Activated CD4-positive, alpha-beta T cell treated with anti-CD3 and anti-CD28 coated beads, Interleukin-2, amount 10 ng/mL, durations not matched to agents 24 days and 14 days (primary cell): ENCODE measurements at regions of chr13 and their contacts with region 1.

Region 1: DNA sequence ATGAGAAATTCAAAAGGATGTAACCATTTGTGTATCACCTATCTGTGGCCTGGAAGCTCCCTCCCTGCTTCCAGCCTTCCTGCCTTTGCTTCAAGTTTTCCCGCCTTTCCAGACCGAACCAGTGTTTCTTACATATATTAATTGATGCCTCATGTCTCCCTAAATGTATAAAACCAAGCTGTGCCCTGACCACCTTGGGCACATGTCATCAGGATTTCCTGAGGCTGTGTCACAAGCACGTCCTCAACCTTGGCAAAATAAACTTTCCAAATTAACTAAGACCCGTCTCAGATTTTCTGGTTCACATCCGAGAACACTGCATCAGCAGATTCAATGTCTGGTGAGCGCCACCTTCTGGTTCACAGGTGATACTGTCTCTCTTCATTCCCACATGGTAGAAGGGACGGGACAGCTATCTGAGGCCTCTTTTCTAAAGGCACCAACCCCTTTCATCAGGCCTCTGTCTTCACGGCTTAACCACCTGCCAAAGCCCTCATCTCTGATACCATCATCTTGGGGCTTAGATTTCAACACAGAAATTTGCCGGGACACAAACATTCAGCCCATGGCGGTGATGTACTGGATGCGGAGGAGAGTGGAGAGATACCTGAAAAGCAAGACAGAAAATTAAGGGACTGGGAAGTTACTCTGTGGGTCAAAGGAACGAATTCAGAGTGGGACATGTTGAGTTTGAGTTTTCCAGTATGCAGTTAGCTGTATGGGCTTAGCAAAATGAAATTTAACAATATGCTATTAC is 58.7 kb upstream of the PABPC3 start:
- DNase-seq: peak; percentile 86
- H3K4me3 Mint-ChIP-seq: no peak overlapping the region
- H3K27ac Mint-ChIP-seq: no peak overlapping the region
- H3K4me1 Mint-ChIP-seq: no peaks in the 10 kb centered on the region
- H3K27me3 Mint-ChIP-seq: peaks cover 41% of the 10 kb centered on the region

Region 2: DNA sequence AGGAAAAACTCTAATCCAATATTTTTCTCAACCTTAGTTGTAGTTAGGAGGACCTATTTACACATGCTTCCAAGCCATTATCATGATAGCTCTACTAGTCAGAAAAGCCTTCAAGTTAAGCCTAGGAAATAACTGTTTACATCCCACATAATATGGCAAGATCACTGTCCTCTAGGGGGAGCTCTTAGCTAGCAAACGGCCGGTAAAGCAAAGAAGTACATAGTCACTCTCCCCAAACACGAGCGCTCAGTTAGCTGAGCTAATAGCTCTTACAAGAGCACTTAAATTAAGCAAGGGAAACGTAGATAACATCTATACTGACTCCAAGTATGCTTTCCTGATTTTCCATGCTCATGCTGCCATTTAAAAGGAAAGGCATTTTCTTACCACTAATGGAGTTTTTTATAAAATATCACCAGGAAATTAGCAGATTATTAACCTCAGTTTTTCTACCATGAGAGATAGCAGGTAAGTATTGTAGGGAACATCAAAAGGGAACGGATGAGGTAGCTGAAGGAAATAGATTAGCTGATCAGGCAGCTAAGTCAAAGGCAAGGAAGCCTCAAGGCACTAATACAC is 41.9 kb before region 1 on chr13:
- intact Hi-C with region 1: loop called (anchors 1 kb)
- DNase-seq: peak; percentile 89
- H3K4me3 Mint-ChIP-seq: no peak overlapping the region
- H3K27ac Mint-ChIP-seq: no peak overlapping the region
- H3K4me1 Mint-ChIP-seq: peaks cover 3% of the 10 kb centered on the region
- H3K27me3 Mint-ChIP-seq: peaks cover 24% of the 10 kb centered on the region

Region 3: DNA sequence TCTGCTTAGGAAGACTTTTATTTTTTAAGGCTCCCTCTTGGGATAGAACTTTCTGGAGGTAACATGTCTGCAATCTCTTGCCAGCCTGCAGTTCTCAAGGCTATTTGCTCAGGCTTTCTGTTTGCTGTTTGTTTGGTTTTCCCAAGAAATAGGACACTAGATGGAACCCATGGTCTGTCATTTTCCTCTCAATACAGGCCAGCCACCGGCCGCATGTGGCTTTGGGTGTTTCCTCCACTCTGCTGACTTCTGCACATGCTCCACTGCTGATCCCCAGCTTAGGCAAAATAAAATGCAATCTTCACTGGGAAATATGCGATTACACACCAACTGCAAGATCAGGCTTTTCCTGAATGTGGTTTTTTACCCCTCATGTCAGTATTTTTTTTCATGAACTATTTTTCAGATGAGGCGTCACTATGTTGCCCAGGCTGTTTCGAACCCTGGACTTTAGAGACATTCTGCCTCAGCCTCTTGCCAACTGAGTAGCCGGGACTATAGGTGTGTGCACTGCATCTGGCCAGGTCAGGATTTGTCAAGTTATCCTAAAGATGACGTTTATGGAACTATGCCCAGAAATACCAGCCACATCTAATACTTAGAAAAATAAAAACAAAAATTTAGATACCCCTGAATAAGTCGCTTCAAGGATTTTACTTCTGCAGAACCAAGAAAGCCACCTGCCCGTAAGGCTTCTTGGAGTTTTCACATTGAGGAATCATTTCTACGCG is 35.6 kb before region 1 on chr13:
- intact Hi-C with region 1: loop called (anchors 1 kb)
- DNase-seq: no peak
- H3K4me3 Mint-ChIP-seq: no peak overlapping the region
- H3K27ac Mint-ChIP-seq: no peak overlapping the region
- H3K4me1 Mint-ChIP-seq: peaks cover 3% of the 10 kb centered on the region
- H3K27me3 Mint-ChIP-seq: peaks cover 46% of the 10 kb centered on the region